ENCODE measurements at regions of chr4 and their contacts with region 1.

Region 1: GRCh38 chr4:27000820-27001219 is 140.2 kb downstream of the STIM2 start:
- DNase-seq: peak; percentile 7
- H3K4me3 ChIP-seq: no peak overlapping the region
- H3K27ac ChIP-seq: no peak overlapping the region
- H3K4me1 ChIP-seq: peaks cover 30% of the 10 kb centered on the region
- H3K27me3 ChIP-seq: no peaks in the 10 kb centered on the region

Region 2: GRCh38 chr4:26860157-26860921 is 140.5 kb before region 1 on chr4 and contains the start of gene STIM2:
- in situ Hi-C with region 1: loop called (anchors 10 kb)
- DNase-seq: peak; percentile 98
- H3K4me3 ChIP-seq: peak within 1 kb of the TSS; percentile 89
- H3K27ac ChIP-seq: peak within 1 kb of the TSS; percentile 65
- H3K4me1 ChIP-seq: peaks cover 28% of the 10 kb centered on the region
- H3K27me3 ChIP-seq: no peaks in the 10 kb centered on the region
- total RNA-seq, gene STIM2: 13.8 and 16.7 TPM in 2 replicates

Region 3: DNA sequence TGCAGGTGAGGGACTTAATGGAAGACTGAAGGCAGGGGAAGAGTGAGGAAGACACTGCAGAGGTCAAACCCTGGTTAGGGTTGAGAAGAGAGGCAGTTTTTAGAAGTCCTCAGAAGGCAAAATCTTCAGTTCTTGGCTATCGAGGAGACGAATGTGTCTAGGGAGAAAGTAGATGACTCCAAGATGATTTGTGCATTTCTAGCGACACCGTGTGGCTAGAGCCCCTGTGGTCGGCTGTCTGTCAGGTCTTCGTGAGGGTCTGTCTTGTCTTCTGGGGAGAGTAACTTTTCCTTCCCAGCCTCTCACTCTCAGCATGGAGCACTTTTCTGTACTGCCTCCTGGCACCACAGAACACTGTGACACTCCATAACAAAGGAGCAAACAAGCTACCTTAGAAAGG is 317.9 kb after region 1 on chr4:
- in situ Hi-C with region 1: no loop called
- DNase-seq: peak; percentile 52
- H3K4me3 ChIP-seq: no peak overlapping the region
- H3K27ac ChIP-seq: no peak overlapping the region
- H3K4me1 ChIP-seq: no peaks in the 10 kb centered on the region
- H3K27me3 ChIP-seq: no peaks in the 10 kb centered on the region

Measured in GM23248 (cell line).